ENCODE measurements at regions of chr16 and their contacts with region 1.

Region 1: GRCh38 chr16:54118846-54119245 is 167.7 kb downstream of the IRX3 start:
- DNase-seq: no peak
- ATAC-seq: no peak

Region 2: GRCh38 chr16:54050166-54050857 is 68.5 kb before region 1 on chr16:
- intact Hi-C with region 1: loop called in 1 of 2 experiments (anchors 10 kb)
- DNase-seq: no peak
- ATAC-seq: no peak

Region 3: GRCh38 chr16:54171626-54172525 is 53.0 kb after region 1 on chr16:
- intact Hi-C with region 1: no loop called
- DNase-seq: no peak
- ATAC-seq: no peak

Measured in left cardiac atrium (tissue), 4 donors.